ENCODE measurements at regions of chr1 and their contacts with region 1.

Region 1: DNA sequence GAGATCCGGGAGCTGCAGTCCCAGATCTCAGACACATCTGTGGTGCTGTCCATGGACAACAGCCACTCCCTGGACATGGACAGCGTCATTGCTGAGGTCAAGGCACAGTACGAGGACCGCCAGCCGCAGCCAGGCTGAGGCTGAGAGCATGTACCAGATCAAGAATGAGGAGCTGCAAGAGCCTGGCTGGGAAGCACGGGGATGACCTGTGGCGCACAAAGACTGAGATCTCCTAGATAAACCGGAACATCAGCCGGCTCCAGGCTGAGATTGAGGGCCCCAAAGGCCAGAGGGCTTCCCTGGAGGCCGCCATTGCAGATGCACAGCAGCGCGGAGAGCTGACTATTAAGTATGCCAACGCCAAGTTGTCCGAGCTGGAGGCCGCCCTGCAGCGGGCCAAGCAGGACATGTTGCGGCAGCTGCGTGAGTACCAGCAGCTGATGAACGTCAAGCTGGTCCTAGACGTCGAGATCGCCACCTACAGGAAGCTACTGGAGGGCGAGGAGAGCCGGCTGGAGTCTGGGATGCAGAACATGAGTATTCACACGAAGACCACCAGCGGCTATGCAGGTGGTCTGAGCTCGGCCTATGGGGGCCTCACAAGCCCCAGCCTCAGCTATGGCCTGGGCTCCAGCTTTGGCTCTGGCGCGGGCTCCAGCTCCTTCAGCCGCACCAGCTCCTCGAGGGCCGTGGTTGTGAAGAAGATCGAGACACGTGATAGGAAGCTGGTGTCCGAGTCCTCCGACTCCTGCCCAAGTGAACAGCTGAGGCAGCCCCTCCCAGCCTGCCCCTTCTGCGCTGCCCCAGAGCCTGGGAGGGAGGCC is 25.5 kb downstream of the ETV3L start:
- DNase-seq: no peak
- H3K4me3 Mint-ChIP-seq: no peak overlapping the region
- H3K27ac Mint-ChIP-seq: no peak overlapping the region
- H3K4me1 Mint-ChIP-seq: no peaks in the 10 kb centered on the region
- H3K27me3 Mint-ChIP-seq: peaks cover 20% of the 10 kb centered on the region

Region 2: DNA sequence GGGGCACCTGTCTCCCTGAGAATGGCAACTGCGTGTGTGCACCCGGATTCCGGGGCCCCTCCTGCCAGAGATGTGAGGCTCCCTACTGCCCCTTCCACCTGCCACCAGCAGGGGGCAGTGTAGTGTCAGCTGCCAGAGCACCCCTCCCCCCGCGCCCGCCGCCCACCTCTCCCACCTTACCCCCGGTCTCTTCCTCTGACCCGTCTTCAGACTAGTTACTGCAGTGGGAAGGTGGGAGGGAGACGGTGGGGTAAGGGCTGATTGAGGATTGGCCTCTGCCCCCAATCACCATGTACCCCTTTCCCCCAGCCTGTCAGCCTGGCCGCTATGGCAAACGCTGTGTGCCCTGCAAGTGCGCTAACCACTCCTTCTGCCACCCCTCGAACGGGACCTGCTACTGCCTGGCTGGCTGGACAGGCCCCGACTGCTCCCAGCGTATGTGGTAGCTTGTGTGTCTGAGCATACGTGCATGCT is 163.8 kb before region 1 on chr1:
- intact Hi-C with region 1: loop called (anchors 10 kb)
- DNase-seq: peak; percentile 45
- H3K4me3 Mint-ChIP-seq: no peak overlapping the region
- H3K27ac Mint-ChIP-seq: peak overlapping the region; percentile 34
- H3K4me1 Mint-ChIP-seq: no peaks in the 10 kb centered on the region
- H3K27me3 Mint-ChIP-seq: peaks cover 15% of the 10 kb centered on the region